CD8-positive, alpha-beta T cell (primary cell): ENCODE measurements at regions of chr15 and their contacts with region 1.

Region 1: GRCh38 chr15:23924688-23925087 is 237.6 kb upstream of the NDN start:
- DNase-seq: no peak
- ATAC-seq: no peak
- H3K4me3 ChIP-seq: no peak overlapping the region
- H3K4me3 Mint-ChIP-seq: no peak overlapping the region
- H3K27ac ChIP-seq: no peak overlapping the region
- H3K27ac Mint-ChIP-seq: no peak overlapping the region
- H3K4me1 ChIP-seq: no peaks in the 10 kb centered on the region
- H3K4me1 Mint-ChIP-seq: no peaks in the 10 kb centered on the region
- H3K27me3 ChIP-seq: no peaks in the 10 kb centered on the region
- H3K27me3 Mint-ChIP-seq: no peaks in the 10 kb centered on the region
- CTCF ChIP-seq: no peak

Region 2: GRCh38 chr15:23629234-23629805 is 295.4 kb before region 1 on chr15:
- CTCF ChIA-PET with region 1: no interaction called
- POLR2A ChIA-PET with region 1: no interaction called
- intact Hi-C with region 1: no loop called
- DNase-seq: no peak
- ATAC-seq: no peak
- H3K4me3 ChIP-seq: no peak overlapping the region
- H3K4me3 Mint-ChIP-seq: no peak overlapping the region
- H3K27ac ChIP-seq: no peak overlapping the region
- H3K27ac Mint-ChIP-seq: no peak overlapping the region
- H3K4me1 ChIP-seq: no peaks in the 10 kb centered on the region
- H3K4me1 Mint-ChIP-seq: no peaks in the 10 kb centered on the region
- H3K27me3 ChIP-seq: no peaks in the 10 kb centered on the region
- H3K27me3 Mint-ChIP-seq: peaks cover 11% of the 10 kb centered on the region
- CTCF ChIP-seq: no peak

Region 3: DNA sequence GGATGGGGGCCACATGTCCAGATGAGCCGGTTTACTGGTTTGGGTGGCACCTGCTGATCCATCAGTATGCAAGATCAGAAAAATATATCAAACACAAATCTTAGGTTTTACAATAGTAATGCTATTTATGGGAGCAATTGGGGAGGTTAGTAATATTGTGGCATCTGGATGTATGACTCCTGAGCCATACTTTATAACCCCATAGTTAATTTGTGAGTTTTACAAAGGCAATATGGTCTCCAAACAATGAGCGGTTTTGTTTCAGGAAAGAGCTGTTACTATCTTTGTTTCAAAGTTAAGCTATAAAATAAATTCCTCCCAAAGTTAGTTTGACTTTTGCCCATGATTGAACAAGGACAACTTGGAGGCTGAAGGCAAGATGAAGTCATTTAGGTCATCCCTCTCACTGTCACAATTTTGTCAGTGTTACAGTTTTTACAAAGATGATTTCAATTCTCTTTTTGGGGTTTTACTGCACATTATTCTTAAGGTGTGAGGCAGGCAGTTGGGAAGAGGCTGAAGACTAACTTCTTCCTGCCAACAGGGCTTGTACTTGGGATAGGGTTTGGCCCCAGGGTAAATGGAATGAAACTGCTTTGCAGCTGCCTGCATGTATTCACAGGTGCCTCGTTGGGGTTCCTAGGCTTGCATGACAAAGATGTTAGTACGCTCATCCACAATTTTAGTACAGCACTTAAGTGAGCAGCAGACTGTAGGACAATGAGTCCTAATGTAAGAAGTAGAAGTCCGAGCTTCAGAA is 59.0 kb after region 1 on chr15:
- CTCF ChIA-PET with region 1: no interaction called
- POLR2A ChIA-PET with region 1: no interaction called
- intact Hi-C with region 1: loop called in 1 of 2 experiments (anchors 10 kb)
- DNase-seq: no peak
- ATAC-seq: no peak
- H3K4me3 ChIP-seq: no peak overlapping the region
- H3K4me3 Mint-ChIP-seq: no peak overlapping the region
- H3K27ac ChIP-seq: no peak overlapping the region
- H3K27ac Mint-ChIP-seq: no peak overlapping the region
- H3K4me1 ChIP-seq: no peaks in the 10 kb centered on the region
- H3K4me1 Mint-ChIP-seq: no peaks in the 10 kb centered on the region
- H3K27me3 ChIP-seq: no peaks in the 10 kb centered on the region
- H3K27me3 Mint-ChIP-seq: no peaks in the 10 kb centered on the region
- CTCF ChIP-seq: no peak